Activated CD4-positive, alpha-beta T cell treated with anti-CD3 and anti-CD28 coated beads for 36 hours (primary cell): ENCODE measurements at regions of chr13 and their contacts with region 1.

Region 1: DNA sequence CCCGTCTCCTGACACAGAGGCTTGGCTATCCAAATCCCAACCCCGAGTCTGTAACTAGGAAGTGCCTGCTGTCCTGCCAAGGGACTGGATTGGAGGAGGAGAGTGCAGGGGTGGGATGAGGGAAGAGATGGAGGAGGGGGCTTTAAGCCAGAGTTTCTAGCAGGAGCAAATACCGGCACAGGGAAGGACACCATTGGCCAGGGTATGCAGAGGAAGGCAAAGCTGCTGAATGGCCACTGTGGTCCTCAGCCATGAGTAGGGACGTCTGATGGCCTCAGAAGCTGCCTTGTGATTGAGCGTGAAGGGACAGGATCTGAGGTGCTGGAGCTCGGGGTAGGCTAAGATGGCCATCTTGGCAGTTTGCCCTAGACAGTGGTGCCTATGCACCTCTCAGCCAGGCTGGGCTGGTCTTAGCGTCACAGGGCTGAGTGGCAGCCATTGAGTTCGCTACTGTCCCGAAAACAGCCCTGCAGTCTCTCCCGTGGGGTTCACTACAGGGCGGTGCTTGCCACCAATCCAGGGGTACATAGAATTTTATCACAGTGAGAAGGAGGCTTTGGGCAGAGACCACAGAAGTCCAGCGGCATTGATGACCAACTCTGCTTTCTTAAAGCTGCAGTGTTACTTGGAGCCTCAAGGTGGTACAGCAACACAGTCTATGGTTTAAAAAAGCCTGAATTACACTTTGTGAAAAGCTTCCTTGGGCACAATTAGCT is 61.8 kb downstream of the AKAP11 start:
- DNase-seq: no peak
- ATAC-seq: peak; percentile 79
- H3K4me3 Mint-ChIP-seq: no peak overlapping the region
- H3K27ac Mint-ChIP-seq: peak overlapping the region; percentile 76
- H3K4me1 Mint-ChIP-seq: peaks cover 41% of the 10 kb centered on the region
- H3K27me3 Mint-ChIP-seq: no peaks in the 10 kb centered on the region

Region 2: GRCh38 chr13:42405665-42406390 is 72.1 kb after region 1 on chr13:
- CTCF ChIA-PET with region 1: interaction called, 4 read pairs
- POLR2A ChIA-PET with region 1: no interaction called
- intact Hi-C with region 1: loop called in 1 of 2 experiments (anchors 5 kb)
- DNase-seq: peak; percentile 83
- ATAC-seq: peak; percentile 86
- H3K4me3 Mint-ChIP-seq: peak overlapping the region; percentile 48
- H3K27ac Mint-ChIP-seq: peak overlapping the region; percentile 94
- H3K4me1 Mint-ChIP-seq: peaks cover 62% of the 10 kb centered on the region
- H3K27me3 Mint-ChIP-seq: no peaks in the 10 kb centered on the region

Region 3: GRCh38 chr13:42478531-42479156 is 144.9 kb after region 1 on chr13:
- CTCF ChIA-PET with region 1: no interaction called
- POLR2A ChIA-PET with region 1: no interaction called
- intact Hi-C with region 1: loop called (anchors 1 to 2 kb)
- DNase-seq: no peak
- ATAC-seq: peak; percentile 36
- H3K4me3 Mint-ChIP-seq: no peak overlapping the region
- H3K27ac Mint-ChIP-seq: no peak overlapping the region
- H3K4me1 Mint-ChIP-seq: peaks cover 21% of the 10 kb centered on the region
- H3K27me3 Mint-ChIP-seq: no peaks in the 10 kb centered on the region

Region 4: GRCh38 chr13:42574435-42575311 is 240.9 kb after region 1 on chr13:
- CTCF ChIA-PET with region 1: no interaction called
- POLR2A ChIA-PET with region 1: no interaction called
- intact Hi-C with region 1: loop called in 1 of 2 experiments (anchors 1 kb)
- DNase-seq: peak; percentile 82
- ATAC-seq: peak; percentile 82
- H3K4me3 Mint-ChIP-seq: peak overlapping the region; percentile 77
- H3K27ac Mint-ChIP-seq: peak overlapping the region; percentile 86
- H3K4me1 Mint-ChIP-seq: peaks cover 41% of the 10 kb centered on the region
- H3K27me3 Mint-ChIP-seq: peaks cover 34% of the 10 kb centered on the region

Region 5: GRCh38 chr13:42594970-42595571 is 261.3 kb after region 1 on chr13:
- CTCF ChIA-PET with region 1: interaction called, 6 read pairs
- POLR2A ChIA-PET with region 1: no interaction called
- intact Hi-C with region 1: loop called in 1 of 2 experiments (anchors 2 kb)
- DNase-seq: peak; percentile 71
- ATAC-seq: peak; percentile 61
- H3K4me3 Mint-ChIP-seq: no peak overlapping the region
- H3K27ac Mint-ChIP-seq: no peak overlapping the region
- H3K4me1 Mint-ChIP-seq: peaks cover under 1% of the 10 kb centered on the region
- H3K27me3 Mint-ChIP-seq: no peaks in the 10 kb centered on the region

Region 6: DNA sequence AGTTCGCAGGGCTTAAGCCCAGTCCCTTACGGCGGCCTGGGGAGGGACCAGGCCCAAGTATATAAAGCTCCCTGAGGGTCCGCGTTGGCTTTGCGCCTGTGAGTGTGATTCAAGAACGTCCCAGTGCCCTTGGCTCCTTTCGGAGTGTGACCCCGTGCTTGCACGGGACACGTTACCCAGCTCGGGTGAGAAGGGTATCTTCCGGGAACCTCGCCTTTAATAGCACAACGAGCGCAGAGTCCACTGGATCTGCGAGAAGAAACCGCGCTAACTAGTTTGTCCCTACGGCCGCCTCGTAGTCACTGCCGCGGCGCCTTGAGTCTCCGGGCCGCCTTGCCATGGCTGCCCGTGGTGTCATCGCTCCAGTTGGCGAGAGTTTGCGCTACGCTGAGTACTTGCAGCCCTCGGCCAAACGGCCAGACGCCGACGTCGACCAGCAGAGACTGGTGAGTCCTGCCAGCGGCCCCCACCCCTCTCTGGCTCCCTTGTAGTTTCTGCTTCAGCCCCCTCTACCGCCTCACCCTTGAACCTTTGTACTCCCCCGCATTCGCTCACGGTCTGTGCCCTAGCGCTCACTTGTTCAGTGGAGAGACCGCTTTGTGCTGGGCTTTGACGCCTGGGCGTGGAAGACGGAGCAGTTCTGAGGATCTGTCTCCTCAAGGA is 689.6 kb after region 1 on chr13 and contains the start of gene DNAJC15:
- CTCF ChIA-PET with region 1: no interaction called
- POLR2A ChIA-PET with region 1: no interaction called
- intact Hi-C with region 1: no loop called
- DNase-seq: peak; percentile 90
- ATAC-seq: peak; percentile 95
- H3K4me3 Mint-ChIP-seq: peak within 1 kb of the TSS; percentile 99
- H3K27ac Mint-ChIP-seq: peak within 1 kb of the TSS; percentile 91
- H3K4me1 Mint-ChIP-seq: peaks cover 28% of the 10 kb centered on the region
- H3K27me3 Mint-ChIP-seq: no peaks in the 10 kb centered on the region
- total RNA-seq, gene DNAJC15: 13.0 to 20.8 TPM